Ascending aorta (tissue), 2 donors: ENCODE measurements at regions of chr1 and their contacts with region 1.

Region 1: DNA sequence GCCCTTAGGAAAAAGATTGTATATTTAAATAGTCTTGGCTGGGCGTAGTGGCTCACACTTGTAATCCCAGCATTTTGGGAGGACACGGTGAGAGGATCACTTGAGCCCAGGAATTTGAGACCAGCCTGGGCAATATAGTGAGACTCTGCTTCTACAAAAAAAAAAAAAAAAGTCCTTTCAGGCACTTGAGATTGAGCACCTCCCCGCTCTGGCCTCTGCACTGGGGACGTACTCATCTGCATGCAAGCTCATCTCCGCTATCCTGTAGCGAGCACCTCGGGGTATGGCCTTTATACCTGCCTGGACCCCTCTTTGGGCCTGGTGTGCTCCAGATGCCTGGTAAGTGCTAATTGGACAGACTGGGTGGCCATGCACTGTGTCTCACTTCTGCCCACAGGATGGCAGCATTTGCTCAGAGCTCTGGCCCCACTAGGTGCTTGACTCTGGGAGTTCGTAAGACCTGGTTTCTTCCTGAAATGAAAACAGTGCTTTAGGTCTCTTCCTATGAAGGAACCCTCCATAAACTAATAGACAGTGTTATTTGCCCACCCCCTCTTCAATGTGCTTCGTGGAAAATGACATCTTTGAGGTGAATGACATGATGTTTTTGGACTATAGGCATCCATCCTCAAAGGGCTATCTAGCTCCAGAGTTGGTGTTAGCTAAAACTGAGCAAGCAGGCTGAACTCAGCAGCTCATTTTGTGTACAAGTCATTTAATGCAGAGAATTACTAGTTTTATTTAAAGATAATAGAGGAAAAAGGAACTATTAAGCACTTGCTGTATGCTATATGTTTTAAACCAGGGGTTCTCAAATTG is 61.7 kb upstream of the ADAR start:
- DNase-seq: peak; percentile 19 to 73
- H3K4me3 ChIP-seq: no peak overlapping the region
- H3K27ac ChIP-seq: no peak overlapping the region
- H3K4me1 ChIP-seq: no peaks in the 10 kb centered on the region
- H3K27me3 ChIP-seq: no peaks in the 10 kb centered on the region
- CTCF ChIP-seq: peak; percentile 53 to 67 (median 58)

Region 2: DNA sequence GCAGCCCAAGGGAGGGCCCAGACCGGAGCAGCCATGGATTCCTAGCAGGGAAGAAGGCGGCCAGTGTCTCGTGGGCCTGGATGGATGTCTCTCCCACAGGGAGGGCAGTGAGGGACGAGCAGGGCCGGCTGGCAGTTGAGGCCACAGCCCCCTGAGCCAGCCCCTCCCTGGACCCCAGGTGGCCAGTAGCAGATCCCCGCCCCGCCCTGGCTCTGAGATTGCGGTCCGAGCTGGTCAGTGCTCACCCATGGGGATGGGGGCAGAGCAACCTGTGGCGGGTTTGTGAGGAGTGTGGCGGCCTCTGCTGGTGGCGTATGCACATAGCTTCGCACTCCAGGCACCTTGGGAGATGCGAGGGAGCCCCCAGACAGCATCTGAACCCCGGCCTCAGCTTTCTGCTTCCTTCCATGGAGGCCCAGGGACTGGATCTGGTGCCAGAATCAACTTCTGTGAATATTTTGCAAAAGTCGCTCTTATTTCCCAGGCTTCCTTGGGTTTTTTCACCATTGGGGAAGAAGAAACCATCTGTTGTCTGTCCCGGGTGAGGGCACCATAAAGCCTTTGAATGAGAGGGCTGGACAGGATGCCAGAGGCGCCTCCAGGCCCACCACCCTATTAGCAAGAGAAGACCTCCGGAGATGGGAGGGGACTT is 208.8 kb after region 1 on chr1:
- intact Hi-C with region 1: loop called (anchors 1 kb)
- DNase-seq: peak in 1 of 2 donors; percentile 88
- H3K4me3 ChIP-seq: no peak overlapping the region
- H3K27ac ChIP-seq: no peak overlapping the region
- H3K4me1 ChIP-seq: no peaks in the 10 kb centered on the region
- H3K27me3 ChIP-seq: no peaks in the 10 kb centered on the region
- CTCF ChIP-seq: peak; percentile 84 to 89 (median 88)